ENCODE measurements at regions of chr2 and their contacts with region 1.

Region 1: DNA sequence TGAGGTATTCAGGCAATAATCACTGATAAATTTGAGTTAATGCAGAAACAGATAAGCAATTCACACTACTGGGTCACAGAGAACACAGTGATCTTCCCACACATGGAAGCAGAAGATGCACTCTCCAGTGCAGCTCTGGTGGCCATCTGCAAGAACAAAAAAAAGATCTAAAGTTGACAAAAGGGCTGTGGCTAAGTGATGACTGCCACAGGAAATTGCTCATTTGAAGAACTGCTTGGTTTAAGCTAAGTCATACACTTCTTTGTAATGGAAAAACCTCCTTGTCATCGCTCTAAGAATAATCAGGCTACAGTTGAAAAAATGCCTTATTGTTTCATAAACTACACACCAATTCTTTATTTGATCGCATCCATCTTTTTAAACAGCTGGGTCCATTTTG is 115.1 kb downstream of the DTNB start:
- DNase-seq: peak; percentile 63
- H3K4me3 Mint-ChIP-seq: no peak overlapping the region
- H3K27ac Mint-ChIP-seq: peak overlapping the region; percentile 80
- H3K4me1 Mint-ChIP-seq: peaks cover 57% of the 10 kb centered on the region
- H3K27me3 Mint-ChIP-seq: no peaks in the 10 kb centered on the region

Region 2: GRCh38 chr2:24329700-24330099 is 1228.6 kb before region 1 on chr2:
- CTCF ChIA-PET with region 1: no interaction called
- POLR2A ChIA-PET with region 1: no interaction called
- intact Hi-C with region 1: no loop called
- DNase-seq: no peak
- H3K4me3 Mint-ChIP-seq: no peak overlapping the region
- H3K27ac Mint-ChIP-seq: no peak overlapping the region
- H3K4me1 Mint-ChIP-seq: peaks cover 30% of the 10 kb centered on the region
- H3K27me3 Mint-ChIP-seq: no peaks in the 10 kb centered on the region

Region 3: GRCh38 chr2:25301453-25302352 is 256.6 kb before region 1 on chr2:
- CTCF ChIA-PET with region 1: no interaction called
- POLR2A ChIA-PET with region 1: no interaction called
- intact Hi-C with region 1: loop called (anchors 1 kb)
- DNase-seq: peak; percentile 94
- H3K4me3 Mint-ChIP-seq: no peak overlapping the region
- H3K27ac Mint-ChIP-seq: peak overlapping the region; percentile 47
- H3K4me1 Mint-ChIP-seq: peaks cover 58% of the 10 kb centered on the region
- H3K27me3 Mint-ChIP-seq: no peaks in the 10 kb centered on the region

Region 4: DNA sequence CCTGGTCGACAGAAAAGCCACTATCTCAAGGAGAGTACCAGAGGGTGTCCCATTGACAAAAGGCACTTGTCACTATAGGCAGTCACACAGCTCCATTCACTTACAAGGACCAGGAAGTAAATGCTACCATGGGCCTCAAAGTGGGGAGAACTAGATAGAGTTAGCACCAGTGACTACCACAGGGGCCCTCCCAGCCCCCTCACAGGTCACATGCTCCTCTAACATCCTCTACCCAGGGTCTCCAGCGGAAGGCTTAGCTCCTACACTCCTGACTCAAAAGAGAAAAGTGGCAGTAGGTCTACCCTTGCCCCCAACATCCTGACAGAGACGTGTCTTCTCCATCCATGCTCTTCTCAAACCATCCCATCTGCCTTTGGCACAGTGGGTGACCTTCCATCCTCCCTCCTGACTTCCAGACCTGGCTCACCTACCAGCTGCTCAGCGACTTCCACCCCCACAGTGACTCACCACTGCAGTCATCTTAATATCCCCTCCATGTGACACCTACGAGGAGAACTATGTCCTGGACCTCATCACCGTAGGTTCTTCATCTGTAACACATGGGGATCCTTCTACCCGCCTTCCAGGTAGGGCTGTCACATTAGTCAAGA is 211.0 kb before region 1 on chr2:
- CTCF ChIA-PET with region 1: no interaction called
- POLR2A ChIA-PET with region 1: no interaction called
- intact Hi-C with region 1: no loop called
- DNase-seq: peak; percentile 78
- H3K4me3 Mint-ChIP-seq: no peak overlapping the region
- H3K27ac Mint-ChIP-seq: peak overlapping the region; percentile 26
- H3K4me1 Mint-ChIP-seq: peaks cover 28% of the 10 kb centered on the region
- H3K27me3 Mint-ChIP-seq: no peaks in the 10 kb centered on the region

Region 5: DNA sequence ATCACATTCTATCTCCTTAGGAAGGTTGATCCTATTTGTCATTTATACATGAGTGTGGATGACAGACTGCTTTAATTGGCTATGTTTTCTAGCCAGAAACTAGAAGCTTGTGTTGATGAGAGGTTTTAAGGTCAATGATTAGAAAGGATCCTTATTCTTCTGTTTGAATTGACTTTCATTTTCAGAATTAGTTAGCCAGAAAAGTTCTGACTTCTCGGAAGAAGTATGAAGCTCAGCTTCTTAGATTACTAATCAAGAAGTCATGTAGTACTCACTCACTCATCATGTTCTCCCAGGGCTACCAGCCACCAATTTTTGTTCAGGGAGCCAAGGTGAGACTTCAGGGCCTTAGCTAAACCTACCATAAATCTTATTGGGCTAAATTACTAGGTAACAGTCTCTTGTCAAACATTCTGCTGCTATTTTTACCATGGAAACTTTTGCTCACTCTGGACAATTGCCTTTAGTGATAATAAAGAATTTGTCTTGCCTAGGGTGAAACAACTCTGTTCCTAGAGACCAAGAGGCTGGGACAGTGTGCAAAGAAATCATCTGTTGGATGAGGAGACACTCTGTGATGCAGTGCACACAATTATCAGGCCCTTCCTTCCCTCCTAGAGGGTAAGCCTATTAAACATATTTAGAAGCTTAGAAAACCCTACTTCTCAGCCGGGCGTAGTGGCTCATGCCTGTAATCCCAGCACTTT is 104.9 kb before region 1 on chr2:
- CTCF ChIA-PET with region 1: interaction called, 4 read pairs
- POLR2A ChIA-PET with region 1: no interaction called
- intact Hi-C with region 1: loop called (anchors 1 kb)
- DNase-seq: peak; percentile 70
- H3K4me3 Mint-ChIP-seq: peak overlapping the region; percentile 5
- H3K27ac Mint-ChIP-seq: peak overlapping the region; percentile 93
- H3K4me1 Mint-ChIP-seq: peaks cover 26% of the 10 kb centered on the region
- H3K27me3 Mint-ChIP-seq: no peaks in the 10 kb centered on the region

Region 6: GRCh38 chr2:25521665-25522387 is 36.4 kb before region 1 on chr2:
- CTCF ChIA-PET with region 1: no interaction called
- POLR2A ChIA-PET with region 1: no interaction called
- intact Hi-C with region 1: loop called (anchors 1 kb)
- DNase-seq: peak; percentile 12
- H3K4me3 Mint-ChIP-seq: no peak overlapping the region
- H3K27ac Mint-ChIP-seq: peak overlapping the region; percentile 26
- H3K4me1 Mint-ChIP-seq: peaks cover 9% of the 10 kb centered on the region
- H3K27me3 Mint-ChIP-seq: no peaks in the 10 kb centered on the region

Region 7: GRCh38 chr2:25586726-25587144 is 28.5 kb after region 1 on chr2:
- CTCF ChIA-PET with region 1: interaction called, 3 read pairs
- POLR2A ChIA-PET with region 1: interaction called, 5 read pairs
- intact Hi-C with region 1: loop called (anchors 1 kb)
- DNase-seq: peak; percentile 65
- H3K4me3 Mint-ChIP-seq: peak overlapping the region; percentile 10
- H3K27ac Mint-ChIP-seq: peak overlapping the region; percentile 70
- H3K4me1 Mint-ChIP-seq: peaks cover 20% of the 10 kb centered on the region
- H3K27me3 Mint-ChIP-seq: no peaks in the 10 kb centered on the region

Region 8: DNA sequence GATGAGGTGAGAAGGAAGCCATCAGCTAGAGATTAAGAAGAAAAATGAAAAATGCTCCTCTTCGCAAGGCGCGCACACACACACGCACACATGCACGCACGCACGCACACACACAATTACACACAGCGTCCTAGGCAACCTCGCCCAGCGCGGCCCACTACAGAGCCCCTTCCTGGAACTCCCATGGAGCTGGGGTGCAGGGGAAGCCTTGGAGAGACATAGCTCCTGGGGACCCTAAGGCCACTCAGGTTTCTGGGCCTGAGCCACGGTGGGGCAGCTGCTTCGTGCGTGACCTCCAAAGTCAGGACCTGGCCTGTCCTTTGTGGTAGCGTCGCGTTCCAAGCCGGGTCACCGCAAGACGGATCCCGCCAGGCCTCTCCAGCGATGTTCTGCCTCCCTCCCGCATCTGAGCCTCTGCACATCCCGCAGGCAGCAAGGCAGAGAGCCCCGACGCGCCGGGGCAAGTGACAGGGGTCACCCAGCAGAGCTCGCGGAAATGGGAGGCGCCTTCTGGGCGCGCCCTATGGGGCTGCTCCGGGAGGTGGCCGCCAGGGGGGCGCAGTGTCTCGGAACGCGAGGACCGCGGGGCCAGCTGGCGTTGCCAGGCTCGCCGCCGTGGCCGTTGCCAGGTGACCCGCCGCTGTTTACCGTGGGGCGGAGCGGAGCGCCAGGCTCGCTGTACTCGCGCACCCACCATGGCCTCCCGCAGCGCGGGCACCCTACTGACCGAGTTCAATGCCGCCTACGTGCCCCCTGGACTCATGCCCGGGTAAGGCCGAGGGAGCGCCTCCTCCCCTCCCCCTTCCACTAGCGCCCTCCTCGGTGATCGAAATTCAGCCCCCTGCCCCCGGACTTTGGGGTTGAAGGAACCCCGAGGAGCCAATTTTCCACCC is 1003.9 kb after region 1 on chr2:
- CTCF ChIA-PET with region 1: no interaction called
- POLR2A ChIA-PET with region 1: no interaction called
- intact Hi-C with region 1: no loop called
- DNase-seq: peak; percentile 45
- H3K4me3 Mint-ChIP-seq: no peak overlapping the region
- H3K27ac Mint-ChIP-seq: no peak overlapping the region
- H3K4me1 Mint-ChIP-seq: peaks cover 2% of the 10 kb centered on the region
- H3K27me3 Mint-ChIP-seq: peaks cover 73% of the 10 kb centered on the region

Measured in activated CD4-positive, alpha-beta memory T cell treated with anti-CD3 and anti-CD28 coated beads for 36 hours (primary cell).